Activated T-helper 2 cell treated with anti-CD3 and anti-CD28 coated beads, Interferon-gamma antibody, Interleukin-2, Interleukin-4, amounts not matched to agents 10 μg/mL and 5 μg/mL and 100 μg/mL, durations not matched to agents 14 hours and 24 hours and 36 hours (primary cell): ENCODE measurements at regions of chr20 and their contacts with region 1.

Region 1: GRCh38 chr20:59120491-59120890 is 43.1 kb upstream of the ZNF831 start:
- DNase-seq: no peak
- H3K4me3 Mint-ChIP-seq: no peak overlapping the region
- H3K27ac Mint-ChIP-seq: peak overlapping the region; percentile 2
- H3K4me1 Mint-ChIP-seq: peaks cover 50% of the 10 kb centered on the region
- H3K27me3 Mint-ChIP-seq: peaks cover 4% of the 10 kb centered on the region

Region 2: GRCh38 chr20:59104831-59105230 is 15.7 kb before region 1 on chr20:
- intact Hi-C with region 1: loop called (anchors 2 kb)
- DNase-seq: no peak
- H3K4me3 Mint-ChIP-seq: no peak overlapping the region
- H3K27ac Mint-ChIP-seq: no peak overlapping the region
- H3K4me1 Mint-ChIP-seq: peaks cover 15% of the 10 kb centered on the region
- H3K27me3 Mint-ChIP-seq: peaks cover 2% of the 10 kb centered on the region

Region 3: DNA sequence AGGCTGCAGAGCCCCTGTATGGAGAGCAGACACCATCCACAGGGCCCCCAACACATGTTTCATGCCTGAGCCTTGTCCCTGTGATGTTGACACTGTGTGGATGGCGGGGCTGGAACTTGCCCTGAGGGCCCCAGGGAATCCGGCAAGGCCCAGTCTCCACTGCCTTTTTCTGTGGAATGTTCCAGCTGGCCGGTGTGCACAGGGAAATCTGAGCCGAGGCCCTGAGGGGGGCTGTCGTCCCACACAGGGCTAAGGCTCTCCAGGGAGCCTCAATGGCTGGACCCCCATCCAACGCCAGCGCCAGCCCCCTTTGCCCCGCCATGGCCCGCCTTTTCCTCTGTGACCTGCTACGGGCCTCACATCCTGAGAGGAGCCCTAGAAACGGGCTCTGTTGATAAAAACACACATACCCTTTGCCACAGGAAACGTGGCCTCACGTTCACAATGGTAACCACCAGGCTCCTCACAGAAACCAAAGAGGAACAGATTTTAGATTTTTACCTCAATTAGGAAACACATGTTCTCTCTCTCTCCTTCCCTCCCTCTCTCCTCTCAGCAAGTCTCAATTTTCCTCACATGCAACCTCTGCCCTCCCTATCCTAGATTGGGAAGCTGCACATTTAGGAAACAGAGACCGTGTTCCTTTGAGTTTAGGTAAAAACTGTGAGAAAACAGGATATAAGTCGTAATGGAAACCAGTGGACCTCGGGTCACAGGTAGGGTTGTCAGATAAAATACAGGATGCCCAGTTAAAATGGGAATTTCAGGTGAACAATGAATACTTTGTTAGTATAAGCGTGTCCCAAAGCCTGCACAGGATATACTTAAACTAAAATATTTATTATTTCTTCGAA is 29.4 kb after region 1 on chr20:
- intact Hi-C with region 1: loop called (anchors 2 kb)
- DNase-seq: peak; percentile 80
- H3K4me3 Mint-ChIP-seq: no peak overlapping the region
- H3K27ac Mint-ChIP-seq: peak overlapping the region; percentile 78
- H3K4me1 Mint-ChIP-seq: peaks cover 87% of the 10 kb centered on the region
- H3K27me3 Mint-ChIP-seq: no peaks in the 10 kb centered on the region